Astrocyte of the cerebellum (primary cell): ENCODE measurements at regions of chr2 and their contacts with region 1.

Region 1: GRCh38 chr2:180980106-180980942 is at the start of gene UBE2E3:
- DNase-seq: peak; percentile 49
- H3K4me3 ChIP-seq: peak within 1 kb of the TSS; percentile 78
- CTCF ChIP-seq: peak; percentile 68

Region 2: GRCh38 chr2:181070119-181070835 is 90.0 kb after region 1 on chr2:
- in situ Hi-C with region 1: loop called (anchors 5 kb)
- DNase-seq: peak; percentile 19
- H3K4me3 ChIP-seq: no peak overlapping the region
- CTCF ChIP-seq: no peak